Heart left ventricle (tissue), 16 donors: ENCODE measurements at regions of chr7 and their contacts with region 1.

Region 1: GRCh38 chr7:86149024-86149665 is 494.6 kb upstream of the GRM3 start:
- DNase-seq: no peak
- ATAC-seq: no peak
- H3K4me3 ChIP-seq: no peak overlapping the region
- H3K27ac ChIP-seq: no peak overlapping the region
- H3K4me1 ChIP-seq: no peaks in the 10 kb centered on the region
- H3K27me3 ChIP-seq: no peaks in the 10 kb centered on the region
- CTCF ChIP-seq: no peak
- POLR2A ChIP-seq: no peak

Region 2: GRCh38 chr7:86137343-86137742 is 11.8 kb before region 1 on chr7:
- intact Hi-C with region 1: loop called in 1 of 10 experiments (anchors 1 kb)
- DNase-seq: no peak
- ATAC-seq: no peak
- H3K4me3 ChIP-seq: no peak overlapping the region
- H3K27ac ChIP-seq: no peak overlapping the region
- H3K4me1 ChIP-seq: no peaks in the 10 kb centered on the region
- H3K27me3 ChIP-seq: no peaks in the 10 kb centered on the region
- CTCF ChIP-seq: no peak
- POLR2A ChIP-seq: no peak

Region 3: DNA sequence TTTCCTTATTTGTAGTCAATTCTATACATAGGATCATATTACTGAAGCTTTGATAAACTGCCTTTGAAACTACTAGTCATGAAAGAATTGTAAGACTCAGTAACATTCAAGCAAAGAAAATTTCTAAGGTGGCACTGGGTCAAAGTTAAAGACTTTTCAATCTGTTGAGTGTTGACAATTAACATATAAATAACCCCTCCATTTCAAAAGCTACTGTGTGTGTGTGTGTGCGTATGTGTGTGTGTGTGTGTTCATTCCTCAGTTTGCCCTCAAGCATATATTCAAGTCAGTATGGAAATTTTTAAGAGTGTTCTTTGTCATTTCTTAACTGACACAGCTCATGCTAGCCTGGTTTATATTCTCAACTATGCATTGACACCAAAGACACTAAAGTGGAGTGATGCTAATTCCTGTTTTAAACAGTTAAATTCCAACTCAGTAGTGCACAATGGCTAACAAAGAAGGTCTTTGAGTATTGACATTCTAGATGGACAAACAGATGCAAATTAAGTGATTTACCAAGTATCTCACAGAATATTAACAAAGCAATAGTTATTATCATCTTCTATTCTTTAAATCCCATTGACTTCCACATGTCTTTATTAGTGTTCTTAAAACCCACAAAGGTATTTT is 179.8 kb after region 1 on chr7:
- intact Hi-C with region 1: no loop called
- DNase-seq: no peak
- ATAC-seq: no peak
- H3K4me3 ChIP-seq: no peak overlapping the region
- H3K27ac ChIP-seq: no peak overlapping the region
- H3K4me1 ChIP-seq: no peaks in the 10 kb centered on the region
- H3K27me3 ChIP-seq: no peaks in the 10 kb centered on the region
- CTCF ChIP-seq: no peak
- POLR2A ChIP-seq: no peak